AG04450 (cell line): ENCODE measurements at regions of chr14 and their contacts with region 1.

Region 1: DNA sequence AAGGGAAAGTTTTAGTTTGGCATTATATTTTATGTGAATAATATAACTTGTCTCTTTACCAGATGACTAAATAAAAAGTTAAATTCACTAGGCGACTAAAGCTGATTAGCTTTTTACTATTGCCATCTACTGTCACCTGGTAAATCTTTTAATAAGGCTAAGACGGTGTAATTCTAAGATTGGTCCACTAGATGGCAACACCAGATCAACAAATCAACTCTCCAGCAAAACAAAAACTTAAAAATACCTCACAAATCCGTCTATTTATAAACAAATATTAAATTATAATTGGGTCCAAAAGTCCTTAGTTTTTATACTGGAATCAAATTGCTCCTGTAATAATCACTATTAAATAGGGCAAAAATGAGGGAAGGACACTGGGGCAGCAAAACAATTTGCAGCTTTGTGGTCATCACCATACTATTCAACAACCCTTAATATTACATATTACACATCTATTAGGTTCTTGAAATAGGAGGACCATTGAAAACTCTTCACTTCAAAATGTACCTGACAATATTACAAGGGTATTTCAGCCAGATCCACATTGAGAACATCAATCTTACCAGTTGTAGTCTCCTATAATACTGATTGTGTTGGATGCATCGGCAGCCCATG is 47.9 kb downstream of the GALC start:
- DNase-seq: peak; percentile 34
- H3K4me3 ChIP-seq: no peak overlapping the region
- H3K27ac ChIP-seq: no peak overlapping the region
- H3K27me3 ChIP-seq: no peaks in the 10 kb centered on the region
- CTCF ChIP-seq: peak; percentile 67

Region 2: DNA sequence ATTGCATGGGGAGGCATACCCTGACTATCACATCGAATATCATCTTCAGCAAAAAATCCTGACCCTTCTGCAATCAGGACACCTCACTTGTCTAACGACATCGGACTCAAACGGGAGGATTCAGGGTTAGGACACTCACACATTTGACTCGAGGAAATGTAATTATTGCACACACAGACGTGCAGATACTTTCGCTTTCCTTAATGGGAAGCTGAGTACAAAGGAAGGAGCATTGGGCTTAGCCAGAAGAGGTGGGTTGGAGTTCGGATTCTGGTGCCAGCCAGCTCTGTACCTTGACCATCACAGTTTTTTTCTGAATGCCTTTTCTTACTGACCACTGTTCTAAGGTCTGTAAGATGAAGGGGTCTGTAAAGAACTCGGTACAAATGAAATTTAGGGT is 212.5 kb before region 1 on chr14:
- CTCF ChIA-PET with region 1: no interaction called
- POLR2A ChIA-PET with region 1: no interaction called
- DNase-seq: no peak
- H3K4me3 ChIP-seq: no peak overlapping the region
- H3K27ac ChIP-seq: no peak overlapping the region
- H3K27me3 ChIP-seq: no peaks in the 10 kb centered on the region
- CTCF ChIP-seq: no peak

Region 3: DNA sequence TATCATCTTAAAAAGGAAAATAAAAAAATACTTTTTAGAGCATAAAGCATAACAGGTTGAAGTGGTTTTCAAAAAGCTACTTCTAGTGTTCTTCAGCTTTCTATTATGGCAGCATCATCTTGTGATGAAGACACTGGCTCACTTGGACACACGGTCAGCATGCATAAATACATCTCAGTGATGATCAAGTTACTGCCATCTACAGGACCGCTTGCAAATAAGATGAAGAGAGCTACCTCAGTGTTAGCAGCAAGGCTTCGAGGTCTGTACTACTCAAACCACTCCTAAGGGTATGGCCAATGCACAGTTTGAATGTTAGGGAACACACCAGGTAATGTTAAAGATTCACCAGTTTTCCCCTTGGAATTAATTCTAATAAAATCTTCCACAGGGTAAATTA is 10.9 kb before region 1 on chr14:
- CTCF ChIA-PET with region 1: interaction called, 25 read pairs
- POLR2A ChIA-PET with region 1: no interaction called
- DNase-seq: no peak
- H3K4me3 ChIP-seq: no peak overlapping the region
- H3K27ac ChIP-seq: no peak overlapping the region
- H3K27me3 ChIP-seq: no peaks in the 10 kb centered on the region
- CTCF ChIP-seq: no peak

Region 4: GRCh38 chr14:87966816-87967215 is 21.7 kb after region 1 on chr14:
- CTCF ChIA-PET with region 1: interaction called, 18 read pairs
- POLR2A ChIA-PET with region 1: no interaction called
- DNase-seq: no peak
- H3K4me3 ChIP-seq: no peak overlapping the region
- H3K27ac ChIP-seq: no peak overlapping the region
- H3K27me3 ChIP-seq: no peaks in the 10 kb centered on the region
- CTCF ChIP-seq: no peak

Region 5: DNA sequence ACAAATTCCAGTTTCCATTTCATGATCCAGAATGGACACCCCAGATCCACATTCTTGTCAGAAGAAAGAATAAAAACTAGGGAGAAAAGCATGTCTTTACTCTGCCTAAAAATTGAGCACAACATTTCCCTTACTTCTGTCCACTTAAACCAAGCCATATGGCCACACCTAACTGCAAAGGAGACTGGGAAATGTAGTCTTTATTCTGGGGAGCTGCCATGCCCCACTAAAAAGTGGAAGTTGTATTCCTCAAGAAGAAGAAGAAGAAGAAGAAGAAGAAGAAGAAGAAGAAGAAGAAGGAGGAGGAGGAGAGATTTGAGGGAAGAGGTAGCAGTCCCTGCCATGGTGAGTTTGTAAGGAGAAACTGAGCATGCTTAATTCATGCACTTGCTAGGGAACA is 144.3 kb after region 1 on chr14:
- CTCF ChIA-PET with region 1: no interaction called
- POLR2A ChIA-PET with region 1: no interaction called
- DNase-seq: no peak
- H3K4me3 ChIP-seq: no peak overlapping the region
- H3K27ac ChIP-seq: no peak overlapping the region
- H3K27me3 ChIP-seq: no peaks in the 10 kb centered on the region
- CTCF ChIP-seq: no peak

Region 6: DNA sequence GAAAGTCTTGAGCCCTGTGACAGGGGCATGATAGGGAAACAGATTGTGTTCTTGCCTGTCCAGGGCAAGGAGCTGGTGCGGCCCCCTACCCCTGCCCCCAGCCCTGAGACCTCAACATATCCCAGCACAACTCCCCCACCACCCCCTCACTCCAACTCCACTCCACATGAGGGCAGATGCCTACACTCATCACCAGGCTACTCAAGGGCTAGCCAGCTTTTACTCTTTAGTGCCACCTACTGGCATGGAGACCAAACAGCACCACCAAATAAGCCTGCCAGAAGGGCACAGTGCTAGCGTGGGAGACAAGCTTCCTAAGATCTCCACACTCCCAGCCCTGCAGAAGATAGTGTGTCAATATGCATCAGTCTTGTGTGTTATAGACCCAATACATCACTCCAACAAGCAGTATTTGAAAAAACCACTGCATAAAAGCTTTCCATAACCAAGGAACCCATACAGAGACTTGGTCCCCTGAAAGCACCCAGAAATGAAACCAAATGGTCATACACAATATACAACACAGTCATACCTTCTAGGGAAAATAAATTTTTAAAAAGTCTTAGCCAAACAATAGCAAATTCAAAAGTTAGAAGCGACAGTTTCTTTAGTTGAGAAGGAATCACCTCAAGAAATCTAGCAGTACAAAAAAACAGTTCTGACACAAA is 223.5 kb after region 1 on chr14:
- CTCF ChIA-PET with region 1: interaction called, 38 read pairs
- POLR2A ChIA-PET with region 1: no interaction called
- DNase-seq: no peak
- H3K4me3 ChIP-seq: no peak overlapping the region
- H3K27ac ChIP-seq: no peak overlapping the region
- H3K27me3 ChIP-seq: no peaks in the 10 kb centered on the region
- CTCF ChIP-seq: peak; percentile 63

Region 7: DNA sequence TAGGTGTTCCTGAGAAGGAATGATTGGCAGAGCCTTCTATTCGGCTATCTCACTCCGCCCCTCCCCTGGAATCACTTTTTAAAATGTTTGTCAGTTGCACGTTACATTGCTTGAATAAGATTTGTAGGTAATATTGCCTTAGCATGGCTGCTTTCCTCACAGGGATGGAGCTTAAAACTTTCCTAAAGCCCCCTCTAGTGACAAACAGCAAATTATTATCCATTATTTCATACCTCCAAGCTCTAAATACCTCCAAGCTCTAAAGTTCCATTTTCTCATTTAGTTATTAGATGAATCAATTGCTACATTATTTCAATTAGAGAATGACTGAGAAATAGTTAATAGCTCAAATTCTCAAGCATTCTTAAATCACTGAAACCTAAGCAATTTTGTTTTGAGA is 435.3 kb after region 1 on chr14:
- CTCF ChIA-PET with region 1: interaction called, 26 read pairs
- POLR2A ChIA-PET with region 1: no interaction called
- DNase-seq: no peak
- H3K4me3 ChIP-seq: no peak overlapping the region
- H3K27ac ChIP-seq: no peak overlapping the region
- H3K27me3 ChIP-seq: peaks cover 4% of the 10 kb centered on the region
- CTCF ChIP-seq: peak; percentile 42